ENCODE measurements at regions of chr7 and their contacts with region 1.

Region 1: GRCh38 chr7:129258649-129259389 is 34.0 kb downstream of the AHCYL2 start:
- DNase-seq: no peak
- ATAC-seq: no peak
- H3K4me3 Mint-ChIP-seq: no peak overlapping the region
- H3K27ac Mint-ChIP-seq: peak overlapping the region; percentile 43
- H3K4me1 Mint-ChIP-seq: peaks cover 20% of the 10 kb centered on the region
- H3K27me3 Mint-ChIP-seq: no peaks in the 10 kb centered on the region

Region 2: GRCh38 chr7:129224251-129225205 is 34.3 kb before region 1 on chr7 and contains the start of gene AHCYL2:
- CTCF ChIA-PET with region 1: interaction called, 76 read pairs
- DNase-seq: peak; percentile 98
- ATAC-seq: peak; percentile 94
- H3K4me3 Mint-ChIP-seq: peak within 1 kb of the TSS; percentile 88
- H3K27ac Mint-ChIP-seq: peak within 1 kb of the TSS; percentile 90
- H3K4me1 Mint-ChIP-seq: peaks cover 30% of the 10 kb centered on the region
- H3K27me3 Mint-ChIP-seq: no peaks in the 10 kb centered on the region
- total RNA-seq, gene AHCYL2: 12.7 to 12.8 TPM

Measured in activated CD8-positive, alpha-beta memory T cell treated with anti-CD3 and anti-CD28 coated beads, Interleukin-2, amount 10 ng/mL, durations not matched to agents 7 days and 5 days (primary cell).